ENCODE measurements at regions of chr11 and their contacts with region 1.

Region 1: DNA sequence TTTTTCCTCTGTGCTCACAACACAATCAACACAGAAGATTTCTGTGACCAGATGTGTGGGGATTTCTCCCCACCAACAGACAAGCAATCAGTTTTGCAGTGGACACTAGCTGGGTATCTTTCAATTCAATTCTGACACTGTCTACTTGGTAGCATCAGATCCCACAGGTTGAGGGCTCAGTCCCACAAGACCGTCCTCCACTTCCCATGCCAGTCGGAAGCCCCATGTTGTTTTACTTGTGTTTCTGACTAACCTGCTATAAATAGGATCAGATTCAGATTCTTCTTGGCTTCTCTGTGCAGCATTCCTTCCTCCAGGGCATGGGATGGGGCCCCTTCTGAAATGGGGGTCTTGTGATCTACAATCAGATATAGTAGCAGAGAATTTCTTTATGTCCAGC is 19.6 kb downstream of the ACER3 start:
- DNase-seq: peak; percentile 59
- H3K4me3 ChIP-seq: no peak overlapping the region
- H3K27ac ChIP-seq: peak overlapping the region; percentile 18
- H3K4me1 ChIP-seq: peaks cover 33% of the 10 kb centered on the region
- H3K27me3 ChIP-seq: no peaks in the 10 kb centered on the region
- CTCF ChIP-seq: no peak
- POLR2A ChIP-seq: no peak

Region 2: GRCh38 chr11:77009533-77010160 is 129.3 kb after region 1 on chr11:
- CTCF ChIA-PET with region 1: no interaction called
- POLR2A ChIA-PET with region 1: interaction called, 12 read pairs
- dilution Hi-C with region 1: no loop called
- intact Hi-C with region 1: no loop called
- DNase-seq: no peak
- H3K4me3 ChIP-seq: no peak overlapping the region
- H3K27ac ChIP-seq: no peak overlapping the region
- H3K4me1 ChIP-seq: no peaks in the 10 kb centered on the region
- H3K27me3 ChIP-seq: no peaks in the 10 kb centered on the region
- CTCF ChIP-seq: no peak
- POLR2A ChIP-seq: no peak